ENCODE measurements at regions of chr1 and their contacts with region 1.

Region 1: GRCh38 chr1:172745014-172745413 is 86.1 kb downstream of the FASLG start:
- DNase-seq: peak in 7 of 14 experiments; percentile 9 to 80 (median 52)
- ATAC-seq: peak; percentile 70
- H3K4me3 ChIP-seq: no peak overlapping the region
- H3K4me3 Mint-ChIP-seq: peak overlapping the region; percentile 72
- H3K27ac ChIP-seq: no peak overlapping the region
- H3K27ac Mint-ChIP-seq: peak overlapping the region; percentile 1
- H3K4me1 ChIP-seq: peaks cover 23% of the 10 kb centered on the region
- H3K4me1 Mint-ChIP-seq: peaks cover 37% of the 10 kb centered on the region
- H3K27me3 ChIP-seq: no peaks in the 10 kb centered on the region
- H3K27me3 Mint-ChIP-seq: no peaks in the 10 kb centered on the region
- CTCF ChIP-seq: peak; percentile 87

Region 2: DNA sequence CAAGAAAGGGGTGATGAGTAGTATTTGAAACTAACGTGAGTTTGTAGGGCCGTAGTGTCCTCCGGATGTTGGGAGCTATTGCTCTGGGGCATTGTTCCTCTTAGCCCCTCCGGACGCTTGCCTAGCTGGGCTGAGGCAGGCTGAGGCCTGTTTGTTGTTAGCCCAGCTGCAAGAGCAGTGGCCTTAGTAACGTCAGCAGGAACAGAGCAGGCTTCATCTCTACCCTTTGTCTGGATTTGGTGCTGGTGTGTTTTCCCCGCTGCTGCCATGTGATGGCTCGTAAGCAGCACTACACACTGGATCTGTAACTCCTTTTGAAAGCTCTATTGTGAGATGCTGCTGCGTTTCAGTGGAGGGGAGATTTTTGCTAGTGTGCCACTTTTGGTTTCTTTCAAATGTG is 846.1 kb before region 1 on chr1:
- CTCF ChIA-PET with region 1: no interaction called
- POLR2A ChIA-PET with region 1: no interaction called
- intact Hi-C with region 1: no loop called
- DNase-seq: no peak
- ATAC-seq: no peak
- H3K4me3 ChIP-seq: no peak overlapping the region
- H3K4me3 Mint-ChIP-seq: no peak overlapping the region
- H3K27ac ChIP-seq: no peak overlapping the region
- H3K27ac Mint-ChIP-seq: no peak overlapping the region
- H3K4me1 ChIP-seq: no peaks in the 10 kb centered on the region
- H3K4me1 Mint-ChIP-seq: peaks cover 17% of the 10 kb centered on the region
- H3K27me3 ChIP-seq: no peaks in the 10 kb centered on the region
- H3K27me3 Mint-ChIP-seq: no peaks in the 10 kb centered on the region
- CTCF ChIP-seq: no peak

Region 3: GRCh38 chr1:172654535-172654934 is 90.5 kb before region 1 on chr1:
- CTCF ChIA-PET with region 1: no interaction called
- POLR2A ChIA-PET with region 1: no interaction called
- intact Hi-C with region 1: no loop called
- DNase-seq: no peak
- ATAC-seq: no peak
- H3K4me3 ChIP-seq: no peak overlapping the region
- H3K4me3 Mint-ChIP-seq: no peak overlapping the region
- H3K27ac ChIP-seq: no peak overlapping the region
- H3K27ac Mint-ChIP-seq: no peak overlapping the region
- H3K4me1 ChIP-seq: peaks cover 20% of the 10 kb centered on the region
- H3K4me1 Mint-ChIP-seq: peaks cover 35% of the 10 kb centered on the region
- H3K27me3 ChIP-seq: no peaks in the 10 kb centered on the region
- H3K27me3 Mint-ChIP-seq: no peaks in the 10 kb centered on the region
- CTCF ChIP-seq: no peak

Region 4: DNA sequence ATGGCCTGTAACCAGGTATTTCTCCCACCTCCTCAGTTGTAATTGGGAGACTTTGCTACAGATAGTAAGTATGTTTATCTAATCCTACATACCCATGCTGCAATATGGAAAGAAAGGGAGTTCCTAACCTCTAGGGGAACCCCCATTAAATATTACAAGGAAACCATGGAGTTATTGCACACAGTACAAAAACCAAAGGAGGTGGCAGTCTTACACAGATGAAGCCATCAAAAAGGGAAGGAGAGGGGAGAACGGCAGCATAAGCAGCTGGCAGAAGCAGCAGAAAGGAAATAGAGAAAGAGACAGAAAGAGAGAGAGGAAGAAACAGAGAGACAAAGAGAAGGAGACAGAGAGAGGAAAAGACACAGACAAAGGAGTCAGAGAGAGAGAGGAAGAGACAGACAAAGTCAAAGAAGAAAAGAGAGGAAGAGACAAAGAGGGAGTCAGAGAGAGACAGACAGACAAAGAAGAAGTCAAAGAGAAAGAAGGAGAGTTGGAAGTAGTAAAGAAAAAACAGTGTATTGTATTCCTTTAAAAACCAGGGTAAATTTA is 56.8 kb after region 1 on chr1:
- CTCF ChIA-PET with region 1: no interaction called
- POLR2A ChIA-PET with region 1: no interaction called
- intact Hi-C with region 1: no loop called
- DNase-seq: no peak
- ATAC-seq: no peak
- H3K4me3 ChIP-seq: no peak overlapping the region
- H3K4me3 Mint-ChIP-seq: no peak overlapping the region
- H3K27ac ChIP-seq: no peak overlapping the region
- H3K27ac Mint-ChIP-seq: no peak overlapping the region
- H3K4me1 ChIP-seq: no peaks in the 10 kb centered on the region
- H3K4me1 Mint-ChIP-seq: no peaks in the 10 kb centered on the region
- H3K27me3 ChIP-seq: no peaks in the 10 kb centered on the region
- H3K27me3 Mint-ChIP-seq: no peaks in the 10 kb centered on the region
- CTCF ChIP-seq: no peak

Region 5: DNA sequence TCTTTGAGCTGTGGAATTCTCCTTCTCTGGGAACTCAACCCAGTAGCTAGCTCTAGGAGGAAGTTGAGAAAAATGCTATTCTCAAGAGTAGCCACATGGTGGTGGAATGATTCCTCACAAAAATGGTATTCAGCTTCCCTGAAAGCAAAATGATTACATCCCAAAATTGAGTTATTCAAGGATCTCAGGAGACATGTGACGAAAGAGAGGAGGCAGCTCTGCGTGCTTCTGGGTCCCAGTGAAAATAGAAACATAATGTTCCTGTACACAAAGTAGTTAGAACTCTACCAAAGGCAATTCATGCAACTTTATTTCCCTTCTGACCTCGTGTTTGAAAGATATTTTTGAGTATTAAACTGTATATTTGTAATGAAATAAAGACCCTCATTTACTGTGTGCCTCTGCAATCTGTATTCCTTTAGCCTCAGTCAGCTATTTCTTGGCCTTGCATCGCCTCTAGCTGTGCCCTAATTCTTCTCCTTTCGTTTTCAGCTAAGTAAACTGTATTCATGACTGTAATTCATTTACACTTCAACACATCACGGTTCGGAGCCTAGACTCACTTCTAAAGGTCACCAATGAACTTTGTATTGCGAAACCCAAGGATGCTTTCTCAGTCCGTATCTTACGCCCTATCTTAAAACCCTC is 81.2 kb after region 1 on chr1:
- CTCF ChIA-PET with region 1: interaction called, 3 read pairs
- POLR2A ChIA-PET with region 1: no interaction called
- intact Hi-C with region 1: loop called in 1 of 2 experiments (anchors 5 kb)
- DNase-seq: peak in 3 of 14 experiments; percentile 29 to 35 (median 34)
- ATAC-seq: no peak
- H3K4me3 ChIP-seq: no peak overlapping the region
- H3K4me3 Mint-ChIP-seq: no peak overlapping the region
- H3K27ac ChIP-seq: no peak overlapping the region
- H3K27ac Mint-ChIP-seq: no peak overlapping the region
- H3K4me1 ChIP-seq: no peaks in the 10 kb centered on the region
- H3K4me1 Mint-ChIP-seq: no peaks in the 10 kb centered on the region
- H3K27me3 ChIP-seq: no peaks in the 10 kb centered on the region
- H3K27me3 Mint-ChIP-seq: no peaks in the 10 kb centered on the region
- CTCF ChIP-seq: peak; percentile 63

Region 6: GRCh38 chr1:172883107-172883791 is 138.2 kb after region 1 on chr1:
- CTCF ChIA-PET with region 1: no interaction called
- POLR2A ChIA-PET with region 1: no interaction called
- intact Hi-C with region 1: no loop called
- DNase-seq: no peak
- ATAC-seq: no peak
- H3K4me3 ChIP-seq: no peak overlapping the region
- H3K4me3 Mint-ChIP-seq: no peak overlapping the region
- H3K27ac ChIP-seq: no peak overlapping the region
- H3K27ac Mint-ChIP-seq: no peak overlapping the region
- H3K4me1 ChIP-seq: peaks cover 9% of the 10 kb centered on the region
- H3K4me1 Mint-ChIP-seq: peaks cover 12% of the 10 kb centered on the region
- H3K27me3 ChIP-seq: no peaks in the 10 kb centered on the region
- H3K27me3 Mint-ChIP-seq: peaks cover 11% of the 10 kb centered on the region
- CTCF ChIP-seq: no peak

Region 7: DNA sequence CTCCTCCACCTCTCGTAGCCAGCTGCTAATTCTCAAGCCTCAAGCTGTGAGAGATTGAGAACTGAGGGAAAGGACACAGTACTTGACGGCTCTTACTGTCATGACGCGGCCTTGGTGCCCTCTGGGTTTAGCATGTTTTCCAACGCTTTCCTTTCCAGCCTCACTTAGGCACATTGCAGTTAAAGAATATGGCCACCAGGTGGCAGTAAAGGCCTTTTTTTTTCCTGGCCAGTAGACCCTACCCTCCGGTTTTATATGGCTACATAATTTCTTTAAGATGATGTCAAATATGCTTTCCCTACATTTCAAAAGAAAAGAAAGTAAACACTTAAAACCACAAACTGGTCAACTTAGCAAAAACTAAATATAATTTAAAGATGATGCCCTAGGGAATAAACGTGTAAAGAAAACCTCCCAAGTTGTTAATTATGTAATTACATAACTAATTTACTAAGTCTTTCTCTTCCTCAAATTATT is 675.4 kb after region 1 on chr1:
- CTCF ChIA-PET with region 1: interaction called, 4 read pairs
- POLR2A ChIA-PET with region 1: no interaction called
- intact Hi-C with region 1: loop called (anchors 1 to 2 kb)
- DNase-seq: peak; percentile 12 to 84 (median 38)
- ATAC-seq: peak; percentile 96
- H3K4me3 ChIP-seq: no peak overlapping the region
- H3K4me3 Mint-ChIP-seq: no peak overlapping the region
- H3K27ac ChIP-seq: no peak overlapping the region
- H3K27ac Mint-ChIP-seq: no peak overlapping the region
- H3K4me1 ChIP-seq: peaks cover 4% of the 10 kb centered on the region
- H3K4me1 Mint-ChIP-seq: peaks cover 7% of the 10 kb centered on the region
- H3K27me3 ChIP-seq: no peaks in the 10 kb centered on the region
- H3K27me3 Mint-ChIP-seq: no peaks in the 10 kb centered on the region
- CTCF ChIP-seq: peak; percentile 91

Region 8: DNA sequence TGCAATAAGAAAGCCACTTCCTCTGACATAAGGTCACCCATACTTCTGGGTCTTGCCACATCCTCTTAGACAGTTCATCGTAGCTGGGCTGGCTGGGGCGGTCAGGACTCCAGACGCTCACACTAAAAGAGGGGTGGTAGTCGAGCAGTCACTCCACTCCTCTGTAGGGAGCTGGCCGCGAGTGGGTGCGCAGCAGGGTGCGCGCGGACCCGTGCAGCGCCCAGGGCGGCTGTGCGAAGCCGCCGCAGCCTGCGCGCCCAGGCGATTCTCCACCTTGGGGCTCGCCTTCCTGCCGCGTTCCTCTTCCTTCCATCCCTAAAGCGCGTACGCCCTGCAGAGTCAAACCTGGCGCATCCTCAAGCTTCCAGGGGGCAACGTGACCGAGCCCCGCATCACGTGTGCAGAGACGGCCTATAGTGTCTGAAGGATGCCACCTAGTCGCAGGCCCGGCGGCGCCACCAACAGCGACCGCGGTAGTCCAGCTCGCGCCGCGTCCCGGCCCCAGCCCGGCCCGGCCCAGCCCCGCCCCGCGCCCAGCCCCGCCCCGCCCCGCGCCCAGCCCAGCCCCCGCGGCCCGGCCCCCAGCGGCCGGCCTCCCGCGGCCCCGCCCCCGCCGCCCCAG is 731.8 kb after region 1 on chr1:
- CTCF ChIA-PET with region 1: no interaction called
- POLR2A ChIA-PET with region 1: no interaction called
- intact Hi-C with region 1: loop called in 1 of 2 experiments (anchors 5 kb)
- DNase-seq: peak; percentile 53 to 91 (median 75)
- ATAC-seq: peak; percentile 79
- H3K4me3 ChIP-seq: peak overlapping the region; percentile 84
- H3K4me3 Mint-ChIP-seq: peak overlapping the region; percentile 93
- H3K27ac ChIP-seq: peak overlapping the region; percentile 48 to 89
- H3K27ac Mint-ChIP-seq: peak overlapping the region; percentile 82
- H3K4me1 ChIP-seq: peaks cover 32% of the 10 kb centered on the region
- H3K4me1 Mint-ChIP-seq: peaks cover 72% of the 10 kb centered on the region
- H3K27me3 ChIP-seq: no peaks in the 10 kb centered on the region
- H3K27me3 Mint-ChIP-seq: no peaks in the 10 kb centered on the region
- CTCF ChIP-seq: no peak

Region 9: DNA sequence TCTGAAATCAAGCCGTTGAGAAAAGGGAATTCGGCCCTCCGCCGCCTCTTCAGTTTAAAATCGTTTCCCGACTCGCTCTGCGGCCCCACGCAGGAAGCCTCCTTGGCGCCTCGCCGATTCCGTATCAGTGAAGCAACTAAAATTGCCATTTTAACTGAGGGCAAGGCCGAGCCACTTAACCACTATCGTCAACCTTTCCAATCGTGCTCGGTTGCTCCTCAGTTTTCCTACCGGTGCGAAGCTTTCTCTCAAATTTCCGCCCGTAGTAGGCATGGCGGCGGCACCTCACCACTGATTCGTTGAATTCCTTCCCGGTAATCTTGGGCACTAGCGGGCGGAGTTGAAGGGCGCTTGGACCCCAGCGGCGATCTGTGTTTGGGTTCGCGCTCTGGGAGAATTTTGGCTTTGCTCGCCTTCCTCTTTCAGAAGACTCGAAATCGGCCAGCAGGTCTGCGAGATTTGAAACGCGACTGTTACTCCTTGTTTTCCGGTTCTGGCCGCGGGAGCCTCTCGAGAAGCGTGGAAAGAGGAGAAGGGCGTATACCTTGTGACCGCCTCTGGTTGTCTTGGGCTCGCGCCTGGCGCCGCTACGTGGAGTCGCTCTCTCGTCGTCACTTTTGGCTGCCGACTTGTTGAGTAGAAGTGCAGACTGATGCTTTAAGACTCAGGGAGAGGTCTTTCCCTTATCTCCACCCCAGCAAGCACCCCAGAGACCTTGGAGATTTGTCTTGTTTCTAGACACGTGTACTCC is 1079.5 kb after region 1 on chr1 and contains the starts of genes CENPL and DARS2:
- CTCF ChIA-PET with region 1: interaction called, 3 read pairs
- POLR2A ChIA-PET with region 1: interaction called, 5 read pairs
- intact Hi-C with region 1: loop called (anchors 1 to 5 kb)
- DNase-seq: peak; percentile 80 to 97 (median 86)
- ATAC-seq: peak; percentile 87
- H3K4me3 ChIP-seq: peak within 1 kb of the TSS; percentile 94
- H3K4me3 Mint-ChIP-seq: peak within 1 kb of the TSS; percentile 96
- H3K27ac ChIP-seq: peak within 1 kb of the TSS; percentile 77 to 92
- H3K27ac Mint-ChIP-seq: peak within 1 kb of the TSS; percentile 89
- H3K4me1 ChIP-seq: peaks cover 26% of the 10 kb centered on the region
- H3K4me1 Mint-ChIP-seq: peaks cover 45% of the 10 kb centered on the region
- H3K27me3 ChIP-seq: no peaks in the 10 kb centered on the region
- H3K27me3 Mint-ChIP-seq: no peaks in the 10 kb centered on the region
- CTCF ChIP-seq: no peak
- total RNA-seq, gene CENPL: 3.8 to 4.7 TPM
- total RNA-seq, gene DARS2: 1.7 TPM

Region 10: DNA sequence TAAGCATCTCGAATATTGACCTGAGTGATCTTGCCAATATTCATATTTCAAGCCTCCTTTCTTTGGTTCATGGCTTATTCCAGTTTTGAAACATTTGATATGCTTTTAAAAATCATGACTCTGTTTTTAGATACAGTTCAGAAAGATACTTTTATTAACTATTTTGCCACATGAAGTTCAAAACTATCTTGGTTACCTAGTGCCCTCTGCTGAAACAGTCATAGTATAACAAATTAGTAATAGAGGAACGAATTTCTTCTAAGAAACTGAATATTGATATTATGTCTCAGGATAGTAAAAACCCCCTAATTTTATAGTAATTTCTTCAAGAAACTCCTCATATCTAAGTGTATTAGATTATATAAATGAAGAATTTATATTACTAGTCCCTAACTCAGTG is 1329.7 kb after region 1 on chr1:
- CTCF ChIA-PET with region 1: no interaction called
- POLR2A ChIA-PET with region 1: no interaction called
- intact Hi-C with region 1: loop called (anchors 5 to 10 kb)
- DNase-seq: peak in 3 of 14 experiments; percentile 16 to 30 (median 25)
- ATAC-seq: no peak
- H3K4me3 ChIP-seq: no peak overlapping the region
- H3K4me3 Mint-ChIP-seq: no peak overlapping the region
- H3K27ac ChIP-seq: no peak overlapping the region
- H3K27ac Mint-ChIP-seq: no peak overlapping the region
- H3K4me1 ChIP-seq: no peaks in the 10 kb centered on the region
- H3K4me1 Mint-ChIP-seq: no peaks in the 10 kb centered on the region
- H3K27me3 ChIP-seq: no peaks in the 10 kb centered on the region
- H3K27me3 Mint-ChIP-seq: no peaks in the 10 kb centered on the region
- CTCF ChIP-seq: peak; percentile 32

Region 11: DNA sequence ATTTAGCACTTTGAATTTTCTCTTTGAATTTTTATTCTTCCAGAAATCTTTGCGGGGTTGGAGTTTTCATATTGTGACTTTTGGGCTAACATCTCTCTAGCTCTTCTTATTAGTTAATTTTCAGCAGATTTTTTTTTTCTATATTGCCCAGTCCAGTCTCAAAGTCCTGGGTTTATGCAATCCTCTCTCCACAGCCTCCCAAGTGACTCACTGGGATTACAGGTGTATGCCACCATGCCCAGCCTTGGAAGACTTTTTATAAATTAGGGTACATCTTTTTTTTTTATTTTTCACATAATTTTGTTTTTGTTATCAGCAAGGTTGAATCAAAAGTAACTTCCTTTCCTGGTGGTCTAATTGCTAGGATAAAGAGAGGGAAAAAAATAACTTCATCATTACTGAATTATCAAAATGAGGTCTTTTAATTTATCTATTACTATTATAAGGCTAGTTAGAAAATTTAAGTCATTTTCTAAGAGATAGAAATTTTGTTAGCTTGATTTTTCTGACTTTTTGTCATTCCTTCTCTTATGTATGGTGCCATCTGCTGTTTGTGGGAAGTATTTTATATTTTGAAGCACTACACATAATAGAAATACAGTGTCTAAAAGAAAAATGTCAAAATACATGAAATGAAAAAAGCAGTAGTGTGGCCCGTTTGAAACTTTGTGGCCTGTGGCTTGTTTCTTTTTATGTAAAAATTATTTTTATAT is 1981.3 kb after region 1 on chr1:
- CTCF ChIA-PET with region 1: no interaction called
- POLR2A ChIA-PET with region 1: no interaction called
- intact Hi-C with region 1: loop called in 1 of 2 experiments (anchors 5 kb)
- DNase-seq: peak in 2 of 14 experiments; percentile 17 to 18
- ATAC-seq: no peak
- H3K4me3 ChIP-seq: no peak overlapping the region
- H3K4me3 Mint-ChIP-seq: no peak overlapping the region
- H3K27ac ChIP-seq: no peak overlapping the region
- H3K27ac Mint-ChIP-seq: no peak overlapping the region
- H3K4me1 ChIP-seq: no peaks in the 10 kb centered on the region
- H3K4me1 Mint-ChIP-seq: no peaks in the 10 kb centered on the region
- H3K27me3 ChIP-seq: no peaks in the 10 kb centered on the region
- H3K27me3 Mint-ChIP-seq: no peaks in the 10 kb centered on the region
- CTCF ChIP-seq: peak; percentile 59

Measured in CD4-positive, alpha-beta T cell (primary cell).